IMR-90 (cell line): ENCODE measurements at regions of chr1 and their contacts with region 1.

Region 1: DNA sequence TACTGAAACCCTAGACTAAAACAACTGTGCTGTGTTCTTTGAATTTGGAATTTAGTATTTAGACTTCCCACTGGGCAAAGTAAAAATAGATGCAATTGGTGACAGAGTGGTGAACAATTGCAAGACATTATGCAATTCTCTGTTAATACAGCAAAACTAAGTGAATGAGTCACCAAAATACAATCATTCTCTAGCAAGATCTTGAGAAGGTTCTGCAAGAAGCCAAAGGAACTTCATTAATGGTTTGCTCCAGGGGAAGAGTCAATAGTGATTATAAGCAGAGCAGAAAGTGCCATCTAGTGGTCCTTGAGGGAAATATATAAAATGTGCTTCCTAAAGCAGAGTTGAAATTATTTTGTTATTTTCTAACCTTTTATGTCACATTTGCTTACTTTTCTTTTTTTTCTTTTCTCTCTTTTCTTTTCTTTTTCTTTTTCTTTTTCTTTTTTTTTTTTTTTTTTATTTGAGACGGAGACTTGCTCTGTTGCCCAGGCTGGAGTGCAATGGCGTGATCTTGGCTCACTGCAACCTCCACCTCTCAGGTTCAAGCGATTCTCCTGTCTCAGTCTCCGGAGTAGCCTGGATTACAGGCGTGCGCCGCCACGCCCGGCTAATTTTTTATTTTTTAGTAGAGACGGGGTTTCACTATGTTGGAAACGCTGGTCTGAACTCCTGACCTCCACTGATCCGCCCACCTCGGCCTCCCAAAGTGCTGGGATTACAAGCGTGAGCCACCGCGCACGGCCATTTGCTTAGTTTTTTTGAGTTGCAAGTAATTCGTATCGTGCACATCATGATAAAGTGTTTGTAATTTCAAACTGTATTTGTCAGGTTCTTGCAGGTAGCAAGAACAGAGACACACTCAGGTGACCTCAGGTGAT is 99.2 kb downstream of the CTH start:
- DNase-seq: peak; percentile 95
- ATAC-seq: peak; percentile 93
- H3K4me3 ChIP-seq: no peak overlapping the region
- H3K27ac ChIP-seq: no peak overlapping the region
- H3K4me1 ChIP-seq: no peaks in the 10 kb centered on the region
- H3K27me3 ChIP-seq: peaks cover 3% of the 10 kb centered on the region; the same call in 1 of the 2 replicates
- CTCF ChIP-seq: peak; percentile 83
- POLR2A ChIP-seq: no peak
- RAD21 ChIP-seq: peak; percentile 86

Region 2: GRCh38 chr1:69747196-69747595 is 763.0 kb before region 1 on chr1:
- CTCF ChIA-PET with region 1: no interaction called
- POLR2A ChIA-PET with region 1: no interaction called
- dilution Hi-C with region 1: no loop called
- in situ Hi-C with region 1: no loop called
- intact Hi-C with region 1: loop called (anchors 10 kb)
- DNase-seq: no peak
- ATAC-seq: no peak
- H3K4me3 ChIP-seq: no peak overlapping the region
- H3K27ac ChIP-seq: no peak overlapping the region
- H3K4me1 ChIP-seq: no peaks in the 10 kb centered on the region
- H3K27me3 ChIP-seq: no peaks in the 10 kb centered on the region
- CTCF ChIP-seq: no peak
- POLR2A ChIP-seq: no peak
- RAD21 ChIP-seq: no peak

Region 3: GRCh38 chr1:70134148-70134547 is 376.1 kb before region 1 on chr1:
- CTCF ChIA-PET with region 1: no interaction called
- POLR2A ChIA-PET with region 1: no interaction called
- dilution Hi-C with region 1: no loop called
- in situ Hi-C with region 1: loop called (anchors 10 kb)
- intact Hi-C with region 1: loop called (anchors 1 kb)
- DNase-seq: no peak
- ATAC-seq: no peak
- H3K4me3 ChIP-seq: no peak overlapping the region
- H3K27ac ChIP-seq: no peak overlapping the region
- H3K4me1 ChIP-seq: no peaks in the 10 kb centered on the region
- H3K27me3 ChIP-seq: no peaks in the 10 kb centered on the region; the same call in 1 of the 2 replicates
- CTCF ChIP-seq: no peak
- POLR2A ChIP-seq: no peak
- RAD21 ChIP-seq: no peak

Region 4: DNA sequence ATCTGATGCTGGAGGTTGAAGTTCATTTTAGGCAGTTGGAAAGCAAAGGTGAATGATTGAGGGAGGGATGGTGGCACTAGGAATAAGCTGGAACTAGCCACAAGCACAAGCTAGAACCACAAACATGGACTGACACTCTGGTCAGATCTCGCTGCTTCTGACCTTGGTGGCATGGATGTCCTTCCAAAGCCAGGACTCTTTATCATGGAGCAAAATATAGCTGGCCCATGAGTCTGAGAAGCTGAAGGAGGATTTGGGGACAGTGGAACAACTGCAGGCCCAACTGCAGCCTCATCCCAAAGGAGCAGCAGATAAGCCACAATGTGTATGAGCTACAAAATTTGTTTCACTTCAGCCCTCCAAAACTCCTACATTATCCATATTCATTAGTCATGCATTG is 253.6 kb before region 1 on chr1:
- CTCF ChIA-PET with region 1: no interaction called
- POLR2A ChIA-PET with region 1: no interaction called
- dilution Hi-C with region 1: no loop called
- in situ Hi-C with region 1: no loop called
- intact Hi-C with region 1: loop called (anchors 10 kb)
- DNase-seq: no peak
- ATAC-seq: no peak
- H3K4me3 ChIP-seq: no peak overlapping the region
- H3K27ac ChIP-seq: no peak overlapping the region
- H3K4me1 ChIP-seq: no peaks in the 10 kb centered on the region
- H3K27me3 ChIP-seq: no peaks in the 10 kb centered on the region
- CTCF ChIP-seq: no peak
- POLR2A ChIP-seq: no peak
- RAD21 ChIP-seq: no peak

Region 5: GRCh38 chr1:70277875-70278274 is 232.4 kb before region 1 on chr1:
- CTCF ChIA-PET with region 1: no interaction called
- POLR2A ChIA-PET with region 1: no interaction called
- dilution Hi-C with region 1: no loop called
- in situ Hi-C with region 1: no loop called
- intact Hi-C with region 1: loop called (anchors 2 kb)
- DNase-seq: no peak
- ATAC-seq: no peak
- H3K4me3 ChIP-seq: no peak overlapping the region
- H3K27ac ChIP-seq: no peak overlapping the region
- H3K4me1 ChIP-seq: no peaks in the 10 kb centered on the region; the same call in 1 of the 2 replicates
- H3K27me3 ChIP-seq: no peaks in the 10 kb centered on the region
- CTCF ChIP-seq: no peak
- POLR2A ChIP-seq: no peak
- RAD21 ChIP-seq: no peak

Region 6: DNA sequence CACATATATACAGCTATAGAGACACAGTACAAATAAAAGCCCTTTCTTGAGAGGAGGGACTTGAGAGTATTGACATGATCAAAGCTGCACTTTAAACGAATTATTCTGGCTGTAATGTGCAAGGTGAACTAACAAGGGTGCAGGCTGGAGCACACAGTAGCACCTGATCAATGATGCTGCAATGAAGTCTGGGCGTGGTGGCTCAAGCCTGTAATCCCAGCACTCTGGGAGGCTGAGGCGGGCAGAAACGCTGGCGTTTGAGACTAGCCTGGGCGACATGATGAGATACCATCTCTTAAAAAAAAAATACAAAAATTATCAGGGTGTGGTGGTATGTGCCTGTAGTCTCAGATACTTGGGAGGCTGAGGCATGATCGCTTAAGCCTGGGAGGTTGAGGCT is 113.2 kb before region 1 on chr1:
- CTCF ChIA-PET with region 1: no interaction called
- POLR2A ChIA-PET with region 1: no interaction called
- dilution Hi-C with region 1: no loop called
- in situ Hi-C with region 1: no loop called
- intact Hi-C with region 1: no loop called
- DNase-seq: no peak
- ATAC-seq: no peak
- H3K4me3 ChIP-seq: no peak overlapping the region
- H3K27ac ChIP-seq: no peak overlapping the region
- H3K4me1 ChIP-seq: no peaks in the 10 kb centered on the region
- H3K27me3 ChIP-seq: no peaks in the 10 kb centered on the region
- CTCF ChIP-seq: no peak
- POLR2A ChIP-seq: no peak
- RAD21 ChIP-seq: no peak

Region 7: DNA sequence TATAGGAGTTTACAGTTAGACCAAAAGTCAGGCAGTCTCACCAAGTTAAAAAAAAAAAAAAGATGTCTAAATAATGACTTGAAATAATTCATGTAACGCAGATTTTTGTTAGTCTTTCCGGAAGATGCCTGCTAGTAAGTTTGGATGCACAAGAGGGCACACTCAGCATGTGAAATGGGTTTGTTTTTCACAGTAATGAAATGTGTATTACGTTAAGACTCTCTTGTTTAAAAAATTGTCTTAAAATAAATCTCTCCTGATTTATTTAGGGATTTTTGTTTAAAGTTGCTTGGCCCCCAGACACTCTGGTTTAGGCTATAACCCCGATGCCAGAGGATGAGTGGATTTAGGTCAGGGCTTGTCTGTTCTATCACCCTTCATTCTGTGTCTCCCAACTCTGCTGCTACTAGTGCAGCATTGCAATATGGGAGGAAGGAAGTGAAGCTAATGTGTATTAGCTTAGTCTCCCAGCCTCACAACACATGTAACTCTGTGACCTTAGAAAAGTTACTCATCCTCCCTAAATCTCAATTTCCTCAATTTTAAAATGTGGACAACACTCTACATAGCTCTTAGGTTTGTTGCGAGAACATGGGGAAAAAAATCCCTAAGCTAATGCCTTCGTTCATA is 73.5 kb before region 1 on chr1:
- CTCF ChIA-PET with region 1: interaction called, 3 read pairs
- POLR2A ChIA-PET with region 1: no interaction called
- dilution Hi-C with region 1: no loop called
- in situ Hi-C with region 1: no loop called
- intact Hi-C with region 1: loop called (anchors 1 kb)
- DNase-seq: peak; percentile 43
- ATAC-seq: peak; percentile 60
- H3K4me3 ChIP-seq: no peak overlapping the region
- H3K27ac ChIP-seq: no peak overlapping the region
- H3K4me1 ChIP-seq: no peaks in the 10 kb centered on the region
- H3K27me3 ChIP-seq: no peaks in the 10 kb centered on the region
- CTCF ChIP-seq: peak; percentile 44
- POLR2A ChIP-seq: no peak
- RAD21 ChIP-seq: peak; percentile 55